Activated CD4-positive, alpha-beta T cell treated with anti-CD3 and anti-CD28 coated beads, Interleukin-2, amount 10 ng/mL, durations not matched to agents 24 days and 14 days (primary cell): ENCODE measurements at regions of chr7 and their contacts with region 1.

Region 1: DNA sequence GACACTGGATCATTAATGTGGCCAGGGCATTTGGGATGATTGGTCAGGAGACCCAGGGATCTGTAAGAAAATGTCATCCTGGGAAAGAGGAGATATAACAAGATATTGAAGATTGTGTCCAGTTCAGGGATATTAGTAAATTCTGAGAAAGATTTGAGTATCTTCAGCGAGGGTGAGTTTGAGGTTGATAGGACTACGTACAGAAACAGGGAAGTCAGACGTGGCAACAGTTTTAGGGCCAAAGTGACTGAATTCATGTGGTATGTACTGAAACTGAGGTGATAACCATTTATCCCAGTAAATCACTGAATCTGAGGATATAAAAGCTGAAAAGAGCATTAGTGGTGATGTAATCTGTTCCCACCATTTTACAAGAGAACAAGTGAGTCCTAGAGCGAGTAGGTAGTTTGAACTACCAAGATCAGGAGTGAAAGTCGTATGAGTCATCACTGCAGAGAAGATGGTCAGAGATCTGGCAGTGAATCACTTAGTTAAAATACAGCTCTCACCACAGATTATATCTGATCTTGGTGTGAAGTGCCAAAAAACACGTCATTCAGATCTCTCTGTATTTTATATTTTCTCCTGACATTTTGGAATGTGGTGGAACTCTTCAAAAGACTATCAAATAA is 220.5 kb downstream of the CDK14 start:
- DNase-seq: no peak
- H3K4me3 Mint-ChIP-seq: no peak overlapping the region
- H3K27ac Mint-ChIP-seq: no peak overlapping the region
- H3K4me1 Mint-ChIP-seq: peaks cover 4% of the 10 kb centered on the region
- H3K27me3 Mint-ChIP-seq: no peaks in the 10 kb centered on the region

Region 2: DNA sequence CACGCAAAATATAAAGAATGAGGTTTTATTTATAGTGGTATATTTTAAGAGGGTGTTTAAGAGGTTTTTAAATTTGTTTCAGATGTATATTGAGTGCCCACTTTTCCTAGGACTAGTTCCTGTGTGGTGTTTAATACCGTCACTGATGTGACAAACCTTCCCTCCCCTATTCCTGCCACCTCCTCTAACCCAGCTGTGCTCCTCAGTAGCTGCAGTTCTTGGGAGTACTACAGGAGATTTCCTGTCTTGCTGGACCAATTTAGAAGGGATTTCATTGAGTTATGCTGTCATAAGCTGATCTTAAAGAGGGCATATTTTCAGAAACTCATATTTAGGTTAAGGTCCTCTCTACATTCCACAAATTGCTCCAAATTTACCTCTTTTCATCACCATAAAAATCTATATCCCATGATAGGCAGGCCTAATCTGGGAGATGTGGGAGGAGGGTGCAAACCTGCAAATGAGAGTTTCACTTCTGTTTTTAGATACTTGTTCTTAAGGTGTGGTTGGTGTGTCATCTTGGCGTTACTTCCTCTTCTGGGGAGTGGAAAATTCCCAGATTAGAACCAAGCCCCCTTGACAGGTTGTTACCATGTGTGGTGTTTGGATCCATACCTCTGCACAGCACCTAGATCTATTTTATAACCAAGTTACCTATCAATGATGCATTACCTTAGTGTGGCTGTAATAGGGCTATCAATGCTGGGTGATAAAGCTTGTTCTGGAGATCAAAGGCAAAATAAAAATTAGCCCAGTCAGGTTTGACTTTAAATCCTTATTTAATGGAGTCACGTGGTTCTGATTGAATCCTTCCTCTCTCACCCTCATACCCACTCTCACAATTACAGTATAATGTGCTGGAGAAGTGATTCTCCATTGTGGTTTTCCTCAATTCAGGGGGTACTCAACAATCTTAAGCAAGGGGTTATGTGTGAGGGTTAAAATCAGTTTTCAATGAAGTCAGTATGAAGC is 79.4 kb before region 1 on chr7:
- intact Hi-C with region 1: loop called (anchors 2 kb)
- DNase-seq: no peak
- H3K4me3 Mint-ChIP-seq: no peak overlapping the region
- H3K27ac Mint-ChIP-seq: no peak overlapping the region
- H3K4me1 Mint-ChIP-seq: peaks cover 6% of the 10 kb centered on the region
- H3K27me3 Mint-ChIP-seq: peaks cover 6% of the 10 kb centered on the region